ENCODE measurements at regions of chr19 and their contacts with region 1.

Region 1: DNA sequence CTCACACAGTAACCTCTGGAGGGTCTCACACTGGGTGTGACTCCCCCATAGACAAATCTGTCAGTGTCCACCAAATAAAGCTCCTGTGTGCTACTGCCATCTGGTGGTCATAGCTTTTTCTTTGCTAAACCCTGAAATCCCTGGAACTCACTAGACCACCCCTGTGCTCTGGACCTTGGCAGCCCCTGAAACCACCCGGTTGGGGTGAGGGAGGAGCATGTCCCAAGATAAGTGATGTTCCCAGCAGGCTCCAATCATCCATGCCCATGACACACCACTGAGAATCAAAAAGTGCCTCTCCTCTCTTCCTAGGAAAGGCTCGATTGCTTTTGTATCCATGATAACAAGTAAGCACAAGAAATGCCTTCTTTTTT is 6.5 kb upstream of the HSD17B14 start:
- DNase-seq: peak; percentile 65
- ATAC-seq: peak; percentile 69
- H3K4me3 Mint-ChIP-seq: no peak overlapping the region
- H3K27ac Mint-ChIP-seq: no peak overlapping the region
- H3K4me1 Mint-ChIP-seq: no peaks in the 10 kb centered on the region
- H3K27me3 Mint-ChIP-seq: no peaks in the 10 kb centered on the region
- CTCF ChIP-seq: peak; percentile 85

Region 2: DNA sequence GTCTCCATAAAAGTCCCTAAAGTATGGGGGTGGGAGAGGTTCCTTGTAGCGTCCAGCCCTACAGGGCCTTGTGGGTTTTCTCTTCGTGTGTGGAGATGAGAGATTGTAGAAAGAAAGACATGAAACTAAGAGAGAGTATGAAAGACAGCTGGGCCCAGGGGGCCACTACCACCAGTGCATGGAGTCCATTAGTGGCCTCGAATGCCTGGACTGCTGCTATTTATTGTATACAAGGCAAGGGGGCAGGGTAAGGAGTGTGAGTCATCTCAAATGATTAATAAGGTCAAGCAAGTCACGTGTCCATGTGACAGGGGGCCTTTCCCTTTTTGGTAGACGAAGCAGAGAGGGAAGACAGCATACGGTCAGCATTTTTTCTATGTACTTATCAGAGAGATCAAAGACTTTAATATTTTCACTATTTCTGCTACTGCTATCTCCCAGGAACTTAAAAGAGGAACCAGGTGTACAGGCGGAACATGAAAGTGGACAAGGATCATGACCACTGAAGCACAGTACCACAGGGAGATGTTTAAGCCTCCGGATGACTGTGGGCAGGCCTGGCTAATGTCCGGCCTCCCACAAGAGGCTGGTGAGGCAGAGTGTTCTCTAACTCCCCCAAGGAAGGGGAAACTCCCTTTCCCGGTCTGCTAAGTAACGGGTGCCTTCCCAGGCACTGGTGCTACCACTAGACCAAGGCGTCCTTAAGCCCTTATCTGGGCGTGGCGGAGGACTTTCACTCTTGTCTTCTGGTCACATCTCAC is 62.0 kb before region 1 on chr19:
- CTCF ChIA-PET with region 1: interaction called, 32 read pairs
- POLR2A ChIA-PET with region 1: interaction called, 5 read pairs
- intact Hi-C with region 1: no loop called
- DNase-seq: no peak
- ATAC-seq: no peak
- H3K4me3 Mint-ChIP-seq: no peak overlapping the region
- H3K27ac Mint-ChIP-seq: no peak overlapping the region
- H3K4me1 Mint-ChIP-seq: peaks cover 3% of the 10 kb centered on the region
- H3K27me3 Mint-ChIP-seq: peaks cover 3% of the 10 kb centered on the region
- CTCF ChIP-seq: no peak

Region 3: GRCh38 chr19:48826606-48827020 is 16.2 kb before region 1 on chr19:
- CTCF ChIA-PET with region 1: interaction called, 45 read pairs
- POLR2A ChIA-PET with region 1: interaction called, 3 read pairs
- intact Hi-C with region 1: no loop called
- DNase-seq: no peak
- ATAC-seq: no peak
- H3K4me3 Mint-ChIP-seq: no peak overlapping the region
- H3K27ac Mint-ChIP-seq: no peak overlapping the region
- H3K4me1 Mint-ChIP-seq: no peaks in the 10 kb centered on the region
- H3K27me3 Mint-ChIP-seq: no peaks in the 10 kb centered on the region
- CTCF ChIP-seq: no peak

Region 4: GRCh38 chr19:48853483-48853882 is 10.7 kb after region 1 on chr19:
- CTCF ChIA-PET with region 1: interaction called, 24 read pairs
- POLR2A ChIA-PET with region 1: interaction called, 4 read pairs
- intact Hi-C with region 1: no loop called
- DNase-seq: no peak
- ATAC-seq: no peak
- H3K4me3 Mint-ChIP-seq: no peak overlapping the region
- H3K27ac Mint-ChIP-seq: no peak overlapping the region
- H3K4me1 Mint-ChIP-seq: no peaks in the 10 kb centered on the region
- H3K27me3 Mint-ChIP-seq: no peaks in the 10 kb centered on the region
- CTCF ChIP-seq: no peak

Region 5: GRCh38 chr19:49009828-49010227 is 167.1 kb after region 1 on chr19:
- CTCF ChIA-PET with region 1: no interaction called
- POLR2A ChIA-PET with region 1: no interaction called
- intact Hi-C with region 1: no loop called
- DNase-seq: no peak
- ATAC-seq: no peak
- H3K4me3 Mint-ChIP-seq: no peak overlapping the region
- H3K27ac Mint-ChIP-seq: no peak overlapping the region
- H3K4me1 Mint-ChIP-seq: no peaks in the 10 kb centered on the region
- H3K27me3 Mint-ChIP-seq: no peaks in the 10 kb centered on the region
- CTCF ChIP-seq: no peak

Measured in activated CD8-positive, alpha-beta T cell treated with anti-CD3 and anti-CD28 coated beads for 36 hours (primary cell).